ENCODE measurements at regions of chr5 and their contacts with region 1.

Region 1: GRCh38 chr5:82551840-82552385 is 273.8 kb upstream of the RPS23 start:
- DNase-seq: no peak
- H3K4me3 ChIP-seq: no peak overlapping the region
- H3K27ac ChIP-seq: no peak overlapping the region
- H3K4me1 ChIP-seq: no peaks in the 10 kb centered on the region
- H3K27me3 ChIP-seq: no peaks in the 10 kb centered on the region
- CTCF ChIP-seq: no peak
- POLR2A ChIP-seq: no peak

Region 2: GRCh38 chr5:82351754-82352145 is 200.2 kb before region 1 on chr5:
- intact Hi-C with region 1: no loop called
- DNase-seq: no peak
- H3K4me3 ChIP-seq: no peak overlapping the region
- H3K27ac ChIP-seq: peak overlapping the region in 1 of 2 donors; percentile 52
- H3K4me1 ChIP-seq: no peaks in the 10 kb centered on the region
- H3K27me3 ChIP-seq: no peaks in the 10 kb centered on the region
- CTCF ChIP-seq: peak; percentile 74 to 84 (median 81)
- POLR2A ChIP-seq: no peak

Region 3: DNA sequence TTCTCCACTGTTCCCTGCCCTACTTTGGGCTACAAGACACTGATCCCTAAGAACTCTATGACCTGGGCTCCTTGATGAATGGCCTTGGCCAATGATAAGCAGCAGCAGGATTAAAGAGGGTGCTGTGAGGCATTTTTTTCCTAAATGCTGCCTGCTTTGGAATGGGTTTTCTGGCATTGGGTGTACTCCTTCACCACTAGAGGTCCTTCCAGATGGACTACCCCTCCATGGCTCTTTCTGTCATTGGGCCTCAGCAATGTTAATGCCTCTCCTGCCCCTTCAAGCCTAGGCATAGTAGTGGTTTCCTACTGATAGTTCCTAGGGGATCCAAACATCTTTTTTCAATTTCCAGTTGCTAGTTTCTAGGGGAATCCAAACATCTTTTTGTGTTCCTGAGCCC is 45.5 kb after region 1 on chr5:
- intact Hi-C with region 1: no loop called
- DNase-seq: no peak
- H3K4me3 ChIP-seq: no peak overlapping the region
- H3K27ac ChIP-seq: no peak overlapping the region
- H3K4me1 ChIP-seq: no peaks in the 10 kb centered on the region
- H3K27me3 ChIP-seq: no peaks in the 10 kb centered on the region
- CTCF ChIP-seq: no peak
- POLR2A ChIP-seq: no peak

Region 4: GRCh38 chr5:82917584-82917983 is 365.7 kb after region 1 on chr5:
- intact Hi-C with region 1: loop called (anchors 10 kb)
- DNase-seq: no peak
- H3K4me3 ChIP-seq: no peak overlapping the region
- H3K27ac ChIP-seq: no peak overlapping the region
- H3K4me1 ChIP-seq: no peaks in the 10 kb centered on the region
- H3K27me3 ChIP-seq: no peaks in the 10 kb centered on the region
- CTCF ChIP-seq: no peak
- POLR2A ChIP-seq: no peak

Region 5: GRCh38 chr5:84354101-84354500 is 1802.2 kb after region 1 on chr5:
- intact Hi-C with region 1: no loop called
- DNase-seq: no peak
- H3K4me3 ChIP-seq: no peak overlapping the region
- H3K27ac ChIP-seq: no peak overlapping the region
- H3K4me1 ChIP-seq: no peaks in the 10 kb centered on the region
- H3K27me3 ChIP-seq: no peaks in the 10 kb centered on the region
- CTCF ChIP-seq: no peak
- POLR2A ChIP-seq: no peak